ENCODE measurements at regions of chr7 and their contacts with region 1.

Region 1: DNA sequence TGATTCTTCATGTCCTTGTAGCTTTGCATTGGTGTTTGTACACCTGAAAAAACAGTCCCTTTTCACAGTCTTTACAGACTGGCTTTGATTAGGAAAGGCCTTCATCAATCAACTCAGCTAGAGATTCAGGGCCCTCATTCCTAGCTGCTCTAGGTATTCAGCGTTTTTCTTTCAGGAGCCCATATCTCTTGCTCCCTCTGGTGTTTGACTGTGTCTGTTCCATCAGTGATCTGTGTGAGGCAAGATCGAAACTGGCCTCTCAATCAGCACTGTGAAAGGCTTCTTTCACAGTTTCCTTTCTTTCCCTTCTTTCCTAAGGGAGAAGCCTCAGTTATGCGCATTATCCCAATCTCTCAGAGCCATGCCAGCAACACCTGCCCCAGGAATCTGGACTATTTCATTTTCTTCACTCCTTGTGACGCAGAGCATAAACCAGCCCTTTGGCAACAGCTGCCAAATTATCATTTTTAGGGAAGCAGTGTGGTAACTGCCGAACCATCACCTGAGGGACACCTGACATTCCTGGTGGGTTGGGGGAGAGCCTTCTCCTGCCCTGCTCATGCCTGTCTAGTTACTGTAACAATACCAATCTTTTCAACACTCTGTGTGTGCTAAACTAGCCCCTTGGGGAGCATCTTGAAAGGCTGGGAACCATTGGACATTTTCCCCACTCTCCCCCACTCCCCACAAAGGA is 75.7 kb upstream of the CCDC71L start:
- DNase-seq: peak; percentile 33
- CTCF ChIP-seq: peak; percentile 73

Region 2: GRCh38 chr7:106176414-106177299 is 560.0 kb before region 1 on chr7:
- in situ Hi-C with region 1: loop called (anchors 25 kb)
- DNase-seq: peak; percentile 69
- CTCF ChIP-seq: peak; percentile 97

Region 3: DNA sequence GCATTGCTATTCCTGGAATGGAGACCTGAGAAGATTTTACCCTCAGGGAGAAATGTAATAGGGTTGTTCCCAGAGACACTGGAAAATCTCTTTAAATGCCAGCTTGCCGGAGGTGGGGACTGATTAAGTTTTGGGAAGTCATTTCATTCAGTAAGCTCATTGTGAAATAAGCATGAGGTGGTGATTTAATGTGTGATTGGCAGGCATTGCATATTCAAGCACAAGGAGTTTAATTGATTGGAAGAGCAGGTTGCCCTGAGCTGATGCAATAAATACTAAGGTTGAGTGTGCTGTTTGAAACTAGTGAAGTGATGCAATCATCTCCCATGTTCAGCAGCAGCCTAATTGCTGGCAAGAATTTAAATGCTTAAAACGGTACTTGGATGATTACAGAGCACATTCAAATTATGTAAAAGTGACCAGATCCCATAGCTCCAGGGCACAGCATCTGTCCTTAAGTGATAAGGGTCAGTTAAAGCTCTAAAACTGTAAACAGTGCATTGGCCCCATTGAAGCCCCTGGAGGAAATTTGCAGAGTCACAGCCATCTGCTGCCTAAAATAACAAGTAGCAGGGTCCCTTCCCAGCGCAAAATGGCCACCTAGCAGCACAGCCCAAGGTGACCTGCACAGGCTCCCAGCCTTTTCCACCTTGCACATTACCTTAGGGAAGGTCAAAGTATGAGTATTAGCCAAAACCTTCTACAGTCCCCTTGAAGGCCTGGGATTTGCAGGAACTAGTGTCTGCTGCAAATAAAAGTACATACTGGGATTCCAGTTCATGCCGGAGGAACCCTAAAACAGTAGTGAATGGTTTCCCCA is 167.8 kb before region 1 on chr7:
- in situ Hi-C with region 1: loop called (anchors 25 kb)
- DNase-seq: no peak
- CTCF ChIP-seq: no peak

Region 4: DNA sequence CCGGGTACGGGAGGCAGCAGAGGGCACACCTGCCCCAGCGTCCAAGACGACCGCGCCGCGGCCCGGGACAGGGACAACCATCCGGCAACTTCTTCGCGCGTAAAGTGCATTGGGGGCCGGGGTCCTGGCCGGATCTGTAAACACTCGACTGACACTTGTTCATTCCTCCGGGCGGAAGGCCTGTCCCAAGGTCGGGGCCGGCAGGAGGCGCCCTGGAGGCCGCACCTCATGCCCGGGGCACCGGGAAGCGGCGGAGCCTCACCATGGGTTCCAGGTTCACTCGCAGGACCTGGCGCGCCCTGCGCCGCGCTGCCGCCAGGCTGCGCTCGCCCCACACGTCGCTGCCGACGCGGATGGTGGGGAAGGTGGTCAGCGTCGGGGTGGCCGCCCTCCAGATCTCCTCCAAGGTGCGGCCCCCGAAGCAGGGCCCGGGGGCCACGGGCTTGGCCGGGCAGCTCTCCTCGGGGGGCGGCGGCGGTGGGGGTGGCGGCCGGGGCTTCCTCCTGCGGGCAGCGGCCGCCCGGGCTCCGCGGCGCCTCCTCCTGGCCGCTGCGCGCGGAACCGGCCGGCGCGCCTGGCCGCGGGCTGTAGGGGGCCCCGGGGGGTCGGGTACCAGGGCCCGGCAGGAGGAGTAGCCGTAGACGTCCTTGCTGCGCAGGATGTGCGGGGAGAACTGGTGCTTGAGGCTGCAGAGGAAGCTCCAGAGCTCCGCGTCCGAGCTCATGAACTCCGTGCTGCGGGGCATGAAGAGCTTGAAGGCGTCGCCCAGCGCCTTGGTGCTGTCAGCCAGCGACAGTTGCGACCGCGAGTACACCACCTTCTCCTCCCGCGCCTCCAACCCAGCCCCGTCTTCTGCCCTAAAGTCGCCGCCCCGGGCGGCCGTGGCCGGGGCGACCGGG is 76.4 kb before region 1 on chr7:
- in situ Hi-C with region 1: loop called (anchors 10 kb)
- DNase-seq: peak; percentile 91
- CTCF ChIP-seq: peak; percentile 97

Measured in GM13977 (cell line).